MCF 10A (cell line): ENCODE measurements at regions of chr11 and their contacts with region 1.

Region 1: GRCh38 chr11:43852057-43852636 is 28.5 kb upstream of the ALKBH3 start:
- DNase-seq: peak; percentile 68
- H3K4me3 Mint-ChIP-seq: no peak overlapping the region
- H3K27ac Mint-ChIP-seq: no peak overlapping the region
- H3K4me1 Mint-ChIP-seq: no peaks in the 10 kb centered on the region
- H3K27me3 Mint-ChIP-seq: no peaks in the 10 kb centered on the region
- CTCF ChIP-seq: peak; percentile 73

Region 2: GRCh38 chr11:43504316-43504950 is 347.7 kb before region 1 on chr11:
- CTCF ChIA-PET with region 1: interaction called, 18 read pairs
- POLR2A ChIA-PET with region 1: no interaction called
- intact Hi-C with region 1: loop called (anchors 1 kb)
- DNase-seq: peak; percentile 42
- H3K4me3 Mint-ChIP-seq: no peak overlapping the region
- H3K27ac Mint-ChIP-seq: no peak overlapping the region
- H3K4me1 Mint-ChIP-seq: peaks cover 21% of the 10 kb centered on the region
- H3K27me3 Mint-ChIP-seq: no peaks in the 10 kb centered on the region
- CTCF ChIP-seq: peak; percentile 41

Region 3: DNA sequence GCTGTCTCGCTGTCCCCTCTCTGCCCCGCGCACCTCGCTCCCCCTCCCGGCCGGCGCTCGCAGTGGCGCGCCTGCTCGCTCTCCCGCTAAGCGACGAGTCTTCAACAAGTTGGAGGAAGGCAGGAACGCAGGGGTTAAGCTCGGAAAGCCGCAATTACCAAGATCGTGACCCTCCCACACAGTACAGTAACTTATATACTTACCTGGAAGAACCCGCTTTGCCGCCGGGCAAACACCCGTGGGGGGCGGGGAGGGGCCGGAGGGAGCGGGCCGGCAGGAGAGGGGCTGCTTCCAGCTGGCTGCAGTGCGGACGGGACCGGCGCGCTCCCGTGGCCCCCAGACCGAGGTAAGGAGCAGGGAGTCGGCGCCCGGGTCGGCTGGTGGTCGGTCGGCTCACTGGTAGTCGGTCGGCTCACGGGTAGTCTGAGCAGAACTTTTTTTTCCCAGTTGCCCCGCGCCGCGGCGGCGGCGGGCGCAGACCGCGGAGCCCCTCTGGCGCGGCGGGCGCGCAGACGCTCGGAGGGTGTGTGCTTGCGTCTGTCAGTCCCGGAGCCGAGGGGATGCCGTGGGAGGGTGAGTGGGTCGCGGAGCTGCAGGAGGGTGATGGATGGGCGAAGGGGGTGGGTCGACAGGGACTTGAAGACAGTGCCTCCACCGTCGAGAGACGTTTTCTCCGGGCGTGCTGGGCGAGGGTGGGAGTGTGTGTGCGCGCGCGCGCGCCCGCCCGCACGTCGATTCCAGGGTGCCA is 272.8 kb before region 1 on chr11:
- CTCF ChIA-PET with region 1: interaction called, 6 read pairs
- POLR2A ChIA-PET with region 1: no interaction called
- intact Hi-C with region 1: loop called (anchors 10 kb)
- DNase-seq: peak; percentile 21
- H3K4me3 Mint-ChIP-seq: peak overlapping the region; percentile 65
- H3K27ac Mint-ChIP-seq: no peak overlapping the region
- H3K4me1 Mint-ChIP-seq: peaks cover 11% of the 10 kb centered on the region
- H3K27me3 Mint-ChIP-seq: peaks cover 89% of the 10 kb centered on the region
- CTCF ChIP-seq: no peak

Region 4: DNA sequence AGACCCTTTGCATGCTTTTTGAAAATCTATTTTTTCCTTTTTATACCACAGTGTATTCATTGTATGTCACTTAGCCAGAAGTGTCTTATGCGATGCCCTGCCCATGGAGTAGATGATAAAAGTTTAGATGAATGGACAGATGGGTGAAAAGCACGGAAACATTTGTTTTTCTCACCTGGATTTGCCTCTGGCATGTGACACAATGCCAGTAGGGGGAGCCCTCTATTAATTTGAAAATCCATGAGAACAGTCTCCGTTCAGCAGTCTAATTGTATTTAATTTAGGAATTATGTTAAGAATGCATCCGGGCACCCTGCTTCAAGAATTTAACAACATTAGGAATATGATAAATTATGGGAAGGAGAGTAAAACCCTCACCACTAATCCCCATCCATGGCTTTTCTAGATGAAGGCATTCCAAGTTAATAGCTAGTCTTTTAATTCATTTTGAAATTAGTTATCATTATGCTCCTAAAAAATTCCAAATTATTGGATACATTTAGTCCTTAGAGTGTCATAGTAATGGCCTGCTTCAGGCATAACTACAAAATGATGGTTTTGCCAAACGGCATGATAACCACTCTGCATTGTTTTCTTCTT is 26.8 kb before region 1 on chr11:
- CTCF ChIA-PET with region 1: interaction called, 99 read pairs
- POLR2A ChIA-PET with region 1: interaction called, 4 read pairs
- intact Hi-C with region 1: loop called (anchors 1 kb)
- DNase-seq: peak; percentile 66
- H3K4me3 Mint-ChIP-seq: no peak overlapping the region
- H3K27ac Mint-ChIP-seq: no peak overlapping the region
- H3K4me1 Mint-ChIP-seq: no peaks in the 10 kb centered on the region
- H3K27me3 Mint-ChIP-seq: no peaks in the 10 kb centered on the region
- CTCF ChIP-seq: peak; percentile 69

Region 5: GRCh38 chr11:43830928-43831440 is 21.2 kb before region 1 on chr11:
- CTCF ChIA-PET with region 1: interaction called, 99 read pairs
- POLR2A ChIA-PET with region 1: interaction called, 9 read pairs
- intact Hi-C with region 1: no loop called
- DNase-seq: peak; percentile 97
- H3K4me3 Mint-ChIP-seq: peak overlapping the region; percentile 78
- H3K27ac Mint-ChIP-seq: peak overlapping the region; percentile 97
- H3K4me1 Mint-ChIP-seq: peaks cover 13% of the 10 kb centered on the region
- H3K27me3 Mint-ChIP-seq: no peaks in the 10 kb centered on the region
- CTCF ChIP-seq: no peak

Region 6: GRCh38 chr11:43837879-43838278 is 14.3 kb before region 1 on chr11:
- CTCF ChIA-PET with region 1: interaction called, 46 read pairs
- POLR2A ChIA-PET with region 1: interaction called, 11 read pairs
- intact Hi-C with region 1: no loop called
- DNase-seq: no peak
- H3K4me3 Mint-ChIP-seq: no peak overlapping the region
- H3K27ac Mint-ChIP-seq: no peak overlapping the region
- H3K4me1 Mint-ChIP-seq: no peaks in the 10 kb centered on the region
- H3K27me3 Mint-ChIP-seq: peaks cover 10% of the 10 kb centered on the region
- CTCF ChIP-seq: no peak

Region 7: DNA sequence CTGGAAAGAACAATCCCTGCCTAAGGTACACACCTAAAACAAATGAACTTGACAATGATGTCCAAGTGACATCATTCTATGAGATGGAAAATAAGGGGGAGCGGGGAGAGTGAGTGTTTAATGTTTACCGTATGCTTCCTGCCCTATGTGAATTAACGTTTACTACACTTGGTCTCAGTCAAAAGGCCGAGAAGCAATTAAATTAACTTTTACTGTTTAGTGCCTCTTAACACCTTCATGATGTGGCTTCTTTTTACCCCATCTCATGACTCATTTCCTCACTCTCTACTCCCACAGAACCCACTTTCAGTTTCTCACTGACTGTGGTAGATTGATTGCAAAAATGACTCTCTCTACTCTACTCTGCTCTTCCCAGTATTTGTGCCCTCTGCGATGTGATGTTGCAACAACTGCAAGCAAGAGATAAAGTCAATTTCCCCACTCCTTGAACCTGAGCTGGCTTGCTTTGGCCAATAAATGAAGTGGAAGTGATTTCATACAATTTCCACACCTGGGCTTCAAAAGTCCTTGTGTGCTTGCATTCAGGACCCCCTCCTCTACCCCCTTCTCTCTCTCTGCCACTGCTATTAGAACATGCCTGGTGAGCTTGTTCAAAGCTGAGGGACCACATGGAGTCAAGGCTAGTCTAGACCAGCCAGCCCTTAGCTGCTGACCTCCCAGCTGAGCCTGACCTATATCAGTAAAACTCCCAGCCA is 16.9 kb after region 1 on chr11:
- CTCF ChIA-PET with region 1: interaction called, 18 read pairs
- POLR2A ChIA-PET with region 1: interaction called, 4 read pairs
- intact Hi-C with region 1: no loop called
- DNase-seq: peak; percentile 83
- H3K4me3 Mint-ChIP-seq: peak overlapping the region; percentile 19
- H3K27ac Mint-ChIP-seq: peak overlapping the region; percentile 3
- H3K4me1 Mint-ChIP-seq: peaks cover 11% of the 10 kb centered on the region
- H3K27me3 Mint-ChIP-seq: peaks cover 30% of the 10 kb centered on the region
- CTCF ChIP-seq: no peak